PC-9 (cell line): ENCODE measurements at regions of chr5 and their contacts with region 1.

Region 1: GRCh38 chr5:57538341-57538955 is 55.8 kb upstream of the ACTBL2 start:
- DNase-seq: peak in 1 of 2 experiments; percentile 29
- H3K4me3 ChIP-seq: no peak overlapping the region
- H3K27ac ChIP-seq: 0 out of 2 replicates have a peak overlapping the region, but pooled peaks have one; percentile 36
- H3K4me1 ChIP-seq: peaks cover 11% of the 10 kb centered on the region; the same call in 1 of the 2 replicates
- H3K27me3 ChIP-seq: no peaks in the 10 kb centered on the region
- CTCF ChIP-seq: no peak

Region 2: GRCh38 chr5:57598756-57599155 is 60.3 kb after region 1 on chr5:
- CTCF ChIA-PET with region 1: no interaction called
- POLR2A ChIA-PET with region 1: interaction called, 15 read pairs
- intact Hi-C with region 1: no loop called
- DNase-seq: peak in 1 of 2 experiments; percentile 35
- H3K4me3 ChIP-seq: no peak overlapping the region
- H3K27ac ChIP-seq: no peak overlapping the region
- H3K4me1 ChIP-seq: no peaks in the 10 kb centered on the region
- H3K27me3 ChIP-seq: no peaks in the 10 kb centered on the region
- CTCF ChIP-seq: no peak